CD4-positive, alpha-beta memory T cell (primary cell): ENCODE measurements at regions of chr1 and their contacts with region 1.

Region 1: DNA sequence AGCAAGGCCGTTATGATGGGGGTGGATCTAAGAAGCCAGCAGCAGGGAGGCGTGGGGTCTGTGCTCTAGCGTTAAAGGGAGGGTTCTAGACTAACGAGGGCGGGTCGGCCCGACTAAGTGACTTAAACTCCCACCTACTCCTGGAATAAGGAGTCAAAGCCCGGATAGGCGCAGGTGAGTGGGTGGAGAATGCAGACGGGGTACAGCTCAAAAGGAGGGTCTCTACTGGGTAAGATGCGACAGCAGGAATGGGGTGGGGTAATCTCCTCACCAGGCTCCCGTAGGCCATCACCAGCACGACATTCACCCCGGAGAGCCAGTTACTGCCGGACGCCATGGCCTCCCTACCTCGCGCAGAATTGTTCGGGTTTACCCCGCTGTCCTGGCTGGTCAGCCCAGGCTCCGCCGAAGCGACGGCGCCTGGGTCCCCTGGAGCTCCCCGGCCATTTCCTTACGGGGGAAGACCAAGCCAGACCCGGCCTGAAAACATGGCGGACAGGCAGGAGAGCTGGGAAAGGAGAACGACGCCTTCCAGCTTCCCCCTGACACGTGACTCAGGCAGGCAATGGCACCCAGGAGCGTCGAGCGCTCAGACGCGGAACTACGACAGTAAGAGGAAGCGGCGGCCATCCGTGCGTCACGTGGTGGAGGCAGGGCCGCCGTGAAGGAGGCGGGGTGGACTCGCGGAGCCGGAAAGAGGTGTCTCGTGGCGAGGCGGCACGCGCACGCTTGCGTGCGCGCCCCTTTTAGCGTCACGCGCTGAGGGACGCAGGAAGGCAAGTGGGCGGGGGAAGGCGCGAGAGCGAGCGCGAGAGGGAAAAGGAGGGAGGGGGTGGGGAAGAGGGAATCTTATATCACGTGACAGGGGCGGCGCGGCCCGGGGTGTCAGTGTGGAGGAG is at the start of gene UBAP2L:
- DNase-seq: peak; percentile 97 to 99 (median 99)
- H3K4me3 ChIP-seq: peak within 1 kb of the TSS; percentile 93 to 99
- H3K4me3 Mint-ChIP-seq: peak within 1 kb of the TSS; percentile 92 to 100 (median 97)
- H3K27ac ChIP-seq: peak within 1 kb of the TSS; percentile 97
- H3K27ac Mint-ChIP-seq: peak within 1 kb of the TSS; percentile 96 to 99 (median 99)
- H3K4me1 ChIP-seq: peaks cover 66% of the 10 kb centered on the region
- H3K4me1 Mint-ChIP-seq: peaks cover 52 to 78% (median 65%) of the 10 kb centered on the region in 4 donors
- H3K27me3 ChIP-seq: no peaks in the 10 kb centered on the region
- H3K27me3 Mint-ChIP-seq: no peaks in the 10 kb centered on the region
- total RNA-seq, gene UBAP2L: 180 to 189 TPM

Region 2: DNA sequence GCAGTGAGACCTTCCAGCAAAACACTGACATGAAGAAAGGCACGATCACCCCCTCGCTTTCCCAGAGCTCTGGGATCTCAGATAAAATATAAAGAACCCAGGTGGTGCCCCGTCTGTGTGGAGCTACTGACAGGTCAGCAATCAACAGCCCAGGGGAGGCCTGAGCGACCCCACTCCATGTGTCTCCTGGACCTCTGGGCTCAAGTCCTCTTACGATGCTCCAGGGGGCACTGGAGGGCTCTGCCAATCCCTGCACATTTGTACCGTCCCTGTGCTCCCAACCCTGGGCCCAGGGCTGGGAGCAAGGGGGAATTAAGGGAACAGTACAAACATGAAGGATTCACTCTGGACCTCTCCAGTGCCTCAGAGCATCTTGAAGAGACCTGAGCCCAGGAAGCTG is 791.5 kb before region 1 on chr1:
- CTCF ChIA-PET with region 1: no interaction called
- POLR2A ChIA-PET with region 1: no interaction called
- intact Hi-C with region 1: no loop called
- DNase-seq: no peak
- H3K4me3 ChIP-seq: no peak overlapping the region
- H3K4me3 Mint-ChIP-seq: no peak overlapping the region
- H3K27ac ChIP-seq: no peak overlapping the region
- H3K27ac Mint-ChIP-seq: no peak overlapping the region
- H3K4me1 ChIP-seq: no peaks in the 10 kb centered on the region
- H3K4me1 Mint-ChIP-seq: no peaks in the 10 kb centered on the region
- H3K27me3 ChIP-seq: no peaks in the 10 kb centered on the region
- H3K27me3 Mint-ChIP-seq: peaks cover 23 to 34% of the 10 kb centered on the region in 2 donors

Region 3: GRCh38 chr1:154166207-154166606 is 54.1 kb before region 1 on chr1:
- CTCF ChIA-PET with region 1: no interaction called
- POLR2A ChIA-PET with region 1: no interaction called
- intact Hi-C with region 1: no loop called
- DNase-seq: no peak
- H3K4me3 ChIP-seq: no peak overlapping the region
- H3K4me3 Mint-ChIP-seq: no peak overlapping the region
- H3K27ac ChIP-seq: no peak overlapping the region
- H3K27ac Mint-ChIP-seq: peak overlapping the region in 2 of 7 donors; percentile 22 to 37
- H3K4me1 ChIP-seq: peaks cover 6% of the 10 kb centered on the region
- H3K4me1 Mint-ChIP-seq: peaks cover 5 to 33% (median 22%) of the 10 kb centered on the region in 4 donors
- H3K27me3 ChIP-seq: no peaks in the 10 kb centered on the region
- H3K27me3 Mint-ChIP-seq: no peaks in the 10 kb centered on the region

Region 4: DNA sequence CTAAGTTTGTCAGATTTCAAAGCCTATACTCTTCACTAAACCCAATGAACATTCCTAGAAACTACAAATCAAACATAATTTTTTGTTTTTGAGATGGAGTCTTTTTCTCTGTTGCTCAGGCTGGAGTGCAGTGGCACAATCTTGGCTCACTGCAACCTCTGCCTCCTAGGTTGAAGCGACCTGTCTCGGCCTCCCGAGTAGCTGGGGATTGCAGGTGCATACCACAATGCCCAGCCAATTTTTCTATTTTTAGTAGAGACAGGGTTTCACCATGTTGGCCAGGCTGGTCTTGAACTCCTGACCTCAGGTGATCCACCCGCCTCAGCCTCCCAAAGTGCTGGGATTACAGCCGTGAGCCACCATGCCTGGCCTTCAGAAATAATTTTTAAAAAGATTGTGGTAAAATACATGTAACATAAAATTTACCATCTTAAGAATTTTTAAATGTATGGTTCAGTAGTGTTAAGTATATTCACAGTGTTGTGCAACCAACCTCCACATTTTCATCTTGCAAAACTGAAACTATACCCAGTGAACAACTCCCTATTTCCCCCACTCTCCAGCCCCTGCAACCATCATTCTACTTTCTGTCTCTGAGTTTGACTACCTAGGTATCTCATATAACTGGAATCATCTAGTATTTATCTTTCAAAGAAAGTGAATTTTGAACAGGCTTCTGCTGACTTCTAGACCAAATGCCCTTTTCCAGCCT is 11.5 kb before region 1 on chr1:
- CTCF ChIA-PET with region 1: interaction called, 3 read pairs
- POLR2A ChIA-PET with region 1: interaction called, 14 read pairs
- intact Hi-C with region 1: no loop called
- DNase-seq: no peak
- H3K4me3 ChIP-seq: no peak overlapping the region
- H3K4me3 Mint-ChIP-seq: no peak overlapping the region
- H3K27ac ChIP-seq: no peak overlapping the region
- H3K27ac Mint-ChIP-seq: peak overlapping the region in 4 of 7 donors; percentile 30 to 89 (median 68)
- H3K4me1 ChIP-seq: no peaks in the 10 kb centered on the region
- H3K4me1 Mint-ChIP-seq: peaks cover 3 to 8% (median 5%) of the 10 kb centered on the region in 4 donors
- H3K27me3 ChIP-seq: no peaks in the 10 kb centered on the region
- H3K27me3 Mint-ChIP-seq: no peaks in the 10 kb centered on the region

Region 5: GRCh38 chr1:154256686-154257085 is 36.4 kb after region 1 on chr1:
- CTCF ChIA-PET with region 1: no interaction called
- POLR2A ChIA-PET with region 1: no interaction called
- intact Hi-C with region 1: no loop called
- DNase-seq: no peak
- H3K4me3 ChIP-seq: no peak overlapping the region
- H3K4me3 Mint-ChIP-seq: no peak overlapping the region
- H3K27ac ChIP-seq: no peak overlapping the region
- H3K27ac Mint-ChIP-seq: peak overlapping the region in 4 of 7 donors; percentile 26 to 83 (median 68)
- H3K4me1 ChIP-seq: no peaks in the 10 kb centered on the region
- H3K4me1 Mint-ChIP-seq: peaks cover 0 to 1% (median 0%) of the 10 kb centered on the region in 4 donors
- H3K27me3 ChIP-seq: no peaks in the 10 kb centered on the region
- H3K27me3 Mint-ChIP-seq: no peaks in the 10 kb centered on the region